ENCODE measurements at regions of chr1 and their contacts with region 1.

Region 1: DNA sequence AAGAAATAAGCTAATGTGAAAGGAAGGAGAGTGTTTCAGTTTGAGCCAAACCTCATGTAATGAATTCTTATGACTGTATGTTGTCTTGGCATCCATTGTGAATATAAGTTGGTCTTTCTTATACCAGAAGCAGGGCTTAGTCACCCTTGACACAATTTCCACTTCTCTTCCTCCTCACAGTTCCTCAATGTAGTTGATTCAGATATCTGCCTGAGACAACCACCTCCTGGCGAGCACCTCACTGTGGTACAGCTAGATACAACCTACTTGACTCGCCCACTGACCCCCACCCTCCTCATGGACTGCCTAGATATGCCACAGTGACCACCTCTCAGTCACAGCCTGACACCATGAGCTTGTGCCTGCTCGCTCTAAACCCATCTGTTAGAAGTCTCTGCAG is 45.6 kb downstream of the KYAT3 start:
- DNase-seq: peak; percentile 17
- H3K4me3 ChIP-seq: no peak overlapping the region
- CTCF ChIP-seq: no peak

Region 2: DNA sequence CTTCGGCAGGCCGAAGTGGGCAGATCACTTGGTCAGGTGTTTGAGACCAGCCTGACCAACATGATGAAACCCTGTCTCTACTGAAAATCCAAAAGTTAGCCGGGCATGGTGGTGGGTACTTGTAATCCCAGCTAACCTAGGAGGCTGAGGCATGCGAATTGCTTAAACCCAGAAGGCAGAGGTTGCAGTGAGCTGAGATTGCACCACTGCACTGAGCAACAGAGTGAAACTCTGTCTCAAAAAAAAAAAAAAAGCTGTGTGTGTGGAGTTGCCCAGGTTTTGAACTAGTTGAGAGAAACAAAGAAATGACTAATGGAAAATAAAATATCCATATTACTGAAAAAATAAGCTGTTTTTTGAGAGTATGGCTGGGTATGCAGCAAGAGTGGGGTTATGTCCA is 155.7 kb before region 1 on chr1:
- CTCF ChIA-PET with region 1: no interaction called
- POLR2A ChIA-PET with region 1: no interaction called
- DNase-seq: no peak
- H3K4me3 ChIP-seq: no peak overlapping the region
- CTCF ChIP-seq: no peak

Region 3: DNA sequence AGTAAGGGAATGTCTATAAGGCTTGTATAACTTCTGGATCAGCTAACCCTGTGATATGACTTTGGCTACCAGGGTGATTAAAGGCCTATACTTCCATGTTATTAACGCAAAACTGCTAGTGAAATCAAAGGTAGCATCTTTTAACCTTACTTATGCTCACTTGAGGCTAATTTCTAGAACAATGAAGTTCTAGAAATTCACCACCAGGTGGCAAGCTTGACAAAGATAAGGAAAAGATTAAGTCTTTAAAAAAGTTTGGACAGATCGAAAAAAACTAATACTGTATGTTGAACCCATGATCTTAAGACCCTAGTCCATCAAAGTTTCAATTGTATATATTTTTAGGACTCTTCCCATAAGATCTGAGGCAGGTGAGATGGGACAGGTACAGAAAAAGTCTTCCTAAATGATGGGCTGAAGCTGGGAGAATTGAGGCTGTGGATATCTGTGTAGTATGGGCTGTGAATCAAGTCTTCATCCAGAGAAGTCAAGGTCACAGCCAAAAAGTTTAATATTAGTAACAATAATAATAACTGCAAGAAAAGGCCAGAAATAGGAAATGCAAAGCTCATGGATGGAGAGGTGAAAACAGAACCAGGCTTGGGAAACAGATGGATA is 26.8 kb after region 1 on chr1:
- CTCF ChIA-PET with region 1: interaction called, 13 read pairs
- POLR2A ChIA-PET with region 1: no interaction called
- DNase-seq: no peak
- H3K4me3 ChIP-seq: no peak overlapping the region
- CTCF ChIP-seq: no peak

Region 4: DNA sequence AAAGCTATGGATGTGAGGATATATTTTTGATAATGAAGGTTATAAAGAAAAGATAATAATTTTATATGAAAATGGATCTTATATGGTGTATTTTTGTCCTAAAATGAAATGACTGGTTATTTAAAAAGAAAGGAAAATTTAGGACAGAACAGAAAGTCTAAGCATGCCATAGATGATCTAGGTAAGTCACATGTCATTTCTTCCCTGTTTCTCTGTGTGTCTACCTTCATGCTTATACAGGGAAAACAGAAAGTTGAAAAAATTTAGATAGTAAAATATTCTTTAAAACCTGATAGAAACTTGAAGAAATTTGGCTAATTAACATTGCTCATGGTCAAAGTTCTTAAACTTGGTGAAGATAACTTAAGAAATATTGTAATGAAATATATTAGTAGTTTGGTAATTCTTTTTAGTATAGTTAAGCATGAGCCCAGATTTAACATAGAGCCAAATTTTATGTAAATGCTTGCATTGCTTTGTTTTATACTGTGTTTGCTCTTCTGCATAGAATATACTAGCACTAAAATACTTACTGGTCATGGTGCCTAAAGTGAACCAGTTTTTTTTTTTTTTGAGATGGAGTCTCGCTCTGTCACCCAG is 264.3 kb after region 1 on chr1:
- CTCF ChIA-PET with region 1: no interaction called
- POLR2A ChIA-PET with region 1: no interaction called
- DNase-seq: no peak
- H3K4me3 ChIP-seq: no peak overlapping the region
- CTCF ChIP-seq: no peak